Dendritic cell treated with granulocyte-macrophage colony-stimulating factor and Interleukin-4, amounts not matched to agents 40 ng/mL and 50 ng/mL, for 4 days (primary cell): ENCODE measurements at regions of chr6 and their contacts with region 1.

Region 1: DNA sequence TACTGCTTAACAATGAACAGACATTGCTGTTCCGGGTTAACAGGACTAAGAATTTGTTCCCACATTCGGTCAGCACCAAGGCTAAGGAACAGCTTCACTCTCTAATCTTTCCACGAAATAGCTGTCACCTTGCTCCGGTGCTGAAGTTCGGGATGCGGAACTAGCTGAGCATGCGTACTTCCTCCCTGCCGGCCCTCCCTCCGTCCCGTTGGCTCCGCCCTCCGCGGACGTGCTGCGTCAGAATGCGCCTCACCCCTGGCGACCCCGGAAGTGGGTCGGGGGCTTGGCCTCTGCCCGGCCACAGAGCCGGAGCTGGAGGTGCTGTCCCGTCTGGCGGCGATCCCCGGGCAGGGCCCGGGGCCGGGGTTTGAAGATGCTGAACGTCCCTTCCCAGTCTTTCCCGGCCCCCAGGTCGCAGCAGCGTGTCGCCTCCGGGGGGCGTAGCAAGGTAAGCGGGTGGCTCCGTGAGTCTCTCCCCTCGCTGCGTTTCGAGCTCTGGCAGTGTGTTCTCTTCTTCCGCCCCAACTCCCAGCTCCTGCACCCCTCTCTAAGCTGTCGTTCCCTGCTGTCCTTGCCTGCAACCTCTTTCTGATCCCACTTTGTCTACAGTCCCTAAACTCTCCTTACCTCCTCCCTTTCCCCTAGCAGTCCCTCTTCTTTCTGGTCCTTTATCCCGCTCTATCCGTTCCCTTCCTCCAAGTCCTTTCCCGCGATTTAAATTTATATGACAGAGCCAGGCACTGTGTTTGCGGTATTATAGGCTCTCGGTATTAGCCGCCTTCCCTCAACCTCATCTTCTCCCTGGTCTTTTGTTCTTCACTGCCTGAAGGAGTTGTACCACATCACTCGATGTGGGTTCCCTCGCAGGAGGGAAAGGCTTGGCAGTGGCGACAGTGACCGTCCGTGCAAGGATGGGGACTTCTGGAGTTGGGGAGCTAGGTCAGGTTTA is at the start of gene CYB5R4:
- H3K4me3 Mint-ChIP-seq: peak within 1 kb of the TSS; percentile 99
- H3K27ac Mint-ChIP-seq: peak within 1 kb of the TSS; percentile 96
- H3K4me1 Mint-ChIP-seq: peaks cover 31% of the 10 kb centered on the region
- H3K27me3 Mint-ChIP-seq: peaks cover 13% of the 10 kb centered on the region

Region 2: GRCh38 chr6:82247634-82248232 is 1612.0 kb before region 1 on chr6 and contains the start of gene IBTK:
- intact Hi-C with region 1: loop called (anchors 10 kb)
- H3K4me3 Mint-ChIP-seq: peak within 1 kb of the TSS; percentile 87
- H3K27ac Mint-ChIP-seq: peak within 1 kb of the TSS; percentile 96
- H3K4me1 Mint-ChIP-seq: peaks cover 38% of the 10 kb centered on the region
- H3K27me3 Mint-ChIP-seq: no peaks in the 10 kb centered on the region

Region 3: DNA sequence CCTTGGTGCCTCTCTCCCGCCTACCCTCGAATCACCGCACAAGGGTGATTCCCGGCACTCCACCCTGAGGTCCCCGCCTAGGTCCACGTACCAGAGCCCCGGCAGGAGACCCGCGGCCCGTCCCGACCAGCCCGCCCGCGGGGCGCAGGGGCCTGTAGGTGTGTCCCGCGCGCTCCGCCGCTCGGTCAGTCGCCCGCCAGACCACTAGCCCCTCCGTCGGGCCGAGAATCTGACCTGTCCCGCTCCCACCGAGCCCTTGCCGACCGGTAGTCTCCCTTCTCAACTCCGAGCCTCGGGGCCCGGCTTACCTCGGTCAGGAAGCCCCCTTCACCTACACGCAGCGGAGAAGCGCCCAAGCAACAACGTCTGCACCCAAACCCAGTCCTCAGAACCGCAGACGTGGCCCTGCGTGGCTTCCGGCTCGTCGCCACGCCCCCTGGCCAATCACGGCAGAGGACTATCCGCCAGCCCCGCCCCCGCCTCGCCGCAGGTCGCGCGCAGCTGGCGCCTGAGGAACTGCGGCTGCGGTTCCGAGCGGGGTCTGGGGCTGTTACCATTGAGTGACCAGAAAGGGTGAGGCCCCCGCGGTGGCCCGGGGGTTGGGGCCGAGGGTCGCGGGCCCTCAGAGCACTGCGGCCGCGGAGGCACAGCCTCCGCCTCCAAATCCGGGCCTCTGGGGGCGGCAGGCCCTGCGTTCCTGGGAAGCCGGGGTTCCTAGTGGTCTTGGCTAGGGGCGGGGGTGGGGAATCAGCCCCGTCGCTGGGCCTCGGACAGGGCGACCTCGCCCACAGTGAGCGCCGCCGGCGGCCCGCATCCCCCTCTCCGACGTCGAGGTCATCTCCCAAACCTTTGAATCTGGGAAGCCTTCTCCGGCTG is 666.6 kb before region 1 on chr6 and contains the starts of genes PGM3 and RWDD2A:
- intact Hi-C with region 1: loop called (anchors 10 kb)
- H3K4me3 Mint-ChIP-seq: peak within 1 kb of the TSS; percentile 93
- H3K27ac Mint-ChIP-seq: peak within 1 kb of the TSS; percentile 92
- H3K4me1 Mint-ChIP-seq: peaks cover 15% of the 10 kb centered on the region
- H3K27me3 Mint-ChIP-seq: peaks cover 10% of the 10 kb centered on the region

Region 4: GRCh38 chr6:83615025-83615999 is 244.4 kb before region 1 on chr6:
- intact Hi-C with region 1: loop called (anchors 10 kb)
- H3K4me3 Mint-ChIP-seq: no peak overlapping the region
- H3K27ac Mint-ChIP-seq: no peak overlapping the region
- H3K4me1 Mint-ChIP-seq: no peaks in the 10 kb centered on the region
- H3K27me3 Mint-ChIP-seq: peaks cover 1% of the 10 kb centered on the region

Region 5: DNA sequence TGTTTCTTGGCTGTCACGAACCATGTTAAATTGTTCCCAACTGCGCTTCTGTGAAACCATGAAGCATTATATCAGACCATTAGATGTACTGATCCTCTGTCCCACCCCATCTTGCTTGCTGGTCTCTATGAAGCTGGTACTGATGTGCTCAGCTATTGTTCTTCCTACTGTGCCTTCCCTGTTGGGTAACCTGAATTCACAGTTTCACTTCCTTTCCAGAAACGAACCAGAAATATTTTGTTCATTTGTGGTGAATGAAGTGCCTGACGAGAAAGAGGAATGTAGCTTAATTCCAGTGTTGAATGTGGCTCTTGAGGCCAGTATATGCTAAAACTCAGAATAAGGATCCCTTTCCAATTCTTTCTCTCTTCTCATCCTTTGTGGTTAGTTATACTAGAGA is 92.7 kb before region 1 on chr6:
- intact Hi-C with region 1: no loop called
- H3K4me3 Mint-ChIP-seq: no peak overlapping the region
- H3K27ac Mint-ChIP-seq: no peak overlapping the region
- H3K4me1 Mint-ChIP-seq: peaks cover 5% of the 10 kb centered on the region
- H3K27me3 Mint-ChIP-seq: peaks cover 1% of the 10 kb centered on the region

Region 6: GRCh38 chr6:84227434-84228197 is 367.9 kb after region 1 on chr6 and contains the start of gene CEP162:
- intact Hi-C with region 1: loop called (anchors 1 kb)
- H3K4me3 Mint-ChIP-seq: peak within 1 kb of the TSS; percentile 99
- H3K27ac Mint-ChIP-seq: peak within 1 kb of the TSS; percentile 86
- H3K4me1 Mint-ChIP-seq: peaks cover 21% of the 10 kb centered on the region
- H3K27me3 Mint-ChIP-seq: peaks cover 20% of the 10 kb centered on the region

Region 7: GRCh38 chr6:84350397-84350796 is 490.7 kb after region 1 on chr6:
- intact Hi-C with region 1: no loop called
- H3K4me3 Mint-ChIP-seq: no peak overlapping the region
- H3K27ac Mint-ChIP-seq: no peak overlapping the region
- H3K4me1 Mint-ChIP-seq: no peaks in the 10 kb centered on the region
- H3K27me3 Mint-ChIP-seq: no peaks in the 10 kb centered on the region